ENCODE measurements at regions of chr3 and their contacts with region 1.

Region 1: GRCh38 chr3:192831111-192831644 is 86.5 kb downstream of the MB21D2 start:
- DNase-seq: no peak
- H3K4me3 ChIP-seq: no peak overlapping the region
- H3K27ac ChIP-seq: no peak overlapping the region
- H3K4me1 ChIP-seq: peaks cover 6% of the 10 kb centered on the region
- H3K27me3 ChIP-seq: no peaks in the 10 kb centered on the region
- CTCF ChIP-seq: no peak
- EP300 ChIP-seq: no peak
- POLR2A ChIP-seq: no peak

Region 2: GRCh38 chr3:192875971-192876581 is 44.9 kb after region 1 on chr3:
- intact Hi-C with region 1: loop called in 1 of 4 experiments (anchors 2 kb)
- DNase-seq: no peak
- H3K4me3 ChIP-seq: no peak overlapping the region
- H3K27ac ChIP-seq: no peak overlapping the region
- H3K4me1 ChIP-seq: peaks cover 6% of the 10 kb centered on the region
- H3K27me3 ChIP-seq: no peaks in the 10 kb centered on the region
- CTCF ChIP-seq: no peak
- EP300 ChIP-seq: no peak
- POLR2A ChIP-seq: no peak

Region 3: GRCh38 chr3:192917404-192918274 is 86.5 kb after region 1 on chr3 and contains the start of gene MB21D2:
- intact Hi-C with region 1: loop called in 2 of 4 experiments (anchors 5 to 10 kb)
- DNase-seq: peak; percentile 81 to 86 (median 83)
- H3K4me3 ChIP-seq: peak within 1 kb of the TSS; percentile 84
- H3K27ac ChIP-seq: peak within 1 kb of the TSS; percentile 67 to 85
- H3K4me1 ChIP-seq: peaks cover 2% of the 10 kb centered on the region
- H3K27me3 ChIP-seq: no peaks in the 10 kb centered on the region
- CTCF ChIP-seq: no peak
- EP300 ChIP-seq: no peak
- POLR2A ChIP-seq: no peak
- total RNA-seq, gene MB21D2: 4.5 to 13.9 (median 6.0) TPM